ENCODE measurements at regions of chr14 and their contacts with region 1.

Region 1: GRCh38 chr14:30638926-30639325 is 16.8 kb downstream of the SCFD1 start:
- DNase-seq: no peak
- H3K4me3 ChIP-seq: no peak overlapping the region
- H3K27ac ChIP-seq: no peak overlapping the region
- H3K4me1 ChIP-seq: no peaks in the 10 kb centered on the region
- H3K27me3 ChIP-seq: no peaks in the 10 kb centered on the region
- CTCF ChIP-seq: no peak
- POLR2A ChIP-seq: no peak

Region 2: DNA sequence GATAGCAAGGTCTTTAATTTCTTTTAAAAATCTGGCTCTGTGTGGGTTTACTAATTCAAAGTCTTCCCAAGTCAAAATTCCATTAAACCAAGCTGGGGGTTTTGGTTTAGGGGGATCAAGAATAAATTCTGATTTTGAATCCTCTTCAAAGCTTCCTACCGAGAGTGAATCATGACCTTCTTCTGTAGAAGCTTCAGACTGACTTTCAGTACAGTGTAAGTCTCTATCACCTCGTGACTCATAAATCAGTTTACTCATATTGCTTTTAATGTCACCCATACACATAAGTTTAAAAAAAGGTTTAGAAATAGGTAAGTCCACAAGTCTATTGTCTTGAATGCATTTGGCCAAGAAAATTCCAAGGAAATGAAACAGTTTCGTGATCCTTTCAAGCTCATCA is 467.8 kb after region 1 on chr14:
- intact Hi-C with region 1: loop called (anchors 10 kb)
- DNase-seq: no peak
- H3K4me3 ChIP-seq: no peak overlapping the region
- H3K27ac ChIP-seq: no peak overlapping the region
- H3K4me1 ChIP-seq: no peaks in the 10 kb centered on the region
- H3K27me3 ChIP-seq: no peaks in the 10 kb centered on the region
- CTCF ChIP-seq: no peak
- POLR2A ChIP-seq: no peak